Colonic mucosa (tissue), 4 donors: ENCODE measurements at regions of chr16 and their contacts with region 1.

Region 1: DNA sequence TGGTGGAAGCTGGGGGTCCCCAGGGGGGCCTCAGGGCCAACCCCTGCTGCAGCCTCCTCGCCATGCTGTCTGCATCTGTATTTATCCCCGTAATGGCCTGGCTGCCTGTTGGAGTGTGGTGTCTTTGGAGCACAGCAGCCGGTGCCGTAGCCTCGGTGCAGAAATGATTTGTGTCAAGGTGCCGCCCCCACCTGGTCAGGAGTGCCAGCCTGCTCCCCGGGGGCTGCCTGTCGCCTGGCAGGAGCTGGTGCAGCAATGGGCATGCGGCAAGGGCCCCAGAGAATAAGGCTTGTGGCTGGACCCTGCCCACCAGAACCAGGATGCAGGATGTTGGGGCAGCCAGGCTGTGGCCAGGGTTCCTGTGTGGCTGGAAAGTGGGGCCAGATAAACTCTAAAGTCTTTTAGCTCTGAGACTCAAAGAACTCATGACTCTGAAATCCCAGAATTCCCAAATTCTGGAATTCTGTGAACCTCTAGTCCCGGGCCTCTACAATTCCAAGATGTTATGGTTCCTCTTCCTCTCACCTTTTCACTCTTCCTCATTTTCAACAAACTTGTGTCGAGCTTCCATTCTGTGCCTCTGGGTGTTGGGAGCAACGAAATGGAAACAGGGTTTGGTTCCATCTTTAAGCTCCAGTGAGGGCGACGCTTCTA is 5.9 kb downstream of the CPNE2 start:
- DNase-seq: no peak
- H3K4me3 ChIP-seq: no peak overlapping the region
- H3K27ac ChIP-seq: no peak overlapping the region
- H3K4me1 ChIP-seq: no peaks in the 10 kb centered on the region
- H3K27me3 ChIP-seq: no peaks in the 10 kb centered on the region
- CTCF ChIP-seq: no peak

Region 2: GRCh38 chr16:57127037-57127763 is 28.9 kb after region 1 on chr16:
- intact Hi-C with region 1: loop called (anchors 2 kb)
- DNase-seq: no peak
- H3K4me3 ChIP-seq: no peak overlapping the region
- H3K27ac ChIP-seq: no peak overlapping the region
- H3K4me1 ChIP-seq: peaks cover 11% of the 10 kb centered on the region
- H3K27me3 ChIP-seq: no peaks in the 10 kb centered on the region
- CTCF ChIP-seq: no peak